ENCODE measurements at regions of chr2 and their contacts with region 1.

Region 1: GRCh38 chr2:63776382-63776781 is 65.3 kb upstream of the UGP2 start:
- DNase-seq: no peak

Region 2: GRCh38 chr2:63790913-63791312 is 14.5 kb after region 1 on chr2:
- intact Hi-C with region 1: loop called in 1 of 2 experiments (anchors 2 kb)
- DNase-seq: no peak

Region 3: DNA sequence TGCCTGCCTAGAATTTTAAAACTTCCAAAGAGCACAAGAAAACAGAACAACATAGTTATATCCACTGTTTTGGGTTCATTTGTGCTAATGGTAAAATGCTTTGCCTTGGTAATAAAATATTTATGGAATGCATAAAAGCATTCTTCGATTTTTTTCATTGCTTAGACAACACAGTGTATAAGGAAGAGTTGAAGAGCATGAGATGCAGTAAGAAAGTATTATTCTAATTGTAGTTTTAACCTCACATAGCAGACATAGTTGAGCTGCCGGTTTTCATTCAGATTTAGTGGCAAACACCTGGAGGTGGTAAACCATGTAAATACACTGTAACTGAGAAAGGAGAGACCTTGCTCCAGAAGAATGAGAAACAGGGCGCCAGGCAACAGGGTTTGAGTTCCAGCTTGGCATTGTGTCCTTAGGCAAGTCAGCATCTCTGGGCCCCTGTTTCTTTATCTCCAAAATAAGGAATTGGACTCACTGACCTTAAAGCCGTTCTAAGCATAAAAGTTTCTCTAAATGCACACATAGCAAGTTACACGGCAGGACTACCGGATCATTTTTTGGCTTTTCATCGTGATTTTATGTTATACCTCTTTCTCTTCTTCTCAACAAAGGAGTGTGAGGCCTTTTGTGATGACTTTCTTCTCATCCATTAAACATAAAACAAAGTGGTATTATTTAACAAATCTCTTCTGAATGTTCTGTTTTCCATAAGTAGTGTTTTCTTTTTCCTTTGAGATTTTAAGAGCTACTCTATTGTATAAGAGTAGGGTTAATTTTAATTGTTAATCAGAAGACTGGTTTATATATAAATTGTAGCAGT is 73.2 kb after region 1 on chr2:
- intact Hi-C with region 1: no loop called
- DNase-seq: no peak

Measured in posterior vena cava (tissue), 2 donors.